ENCODE measurements at regions of chr2 and their contacts with region 1.

Region 1: DNA sequence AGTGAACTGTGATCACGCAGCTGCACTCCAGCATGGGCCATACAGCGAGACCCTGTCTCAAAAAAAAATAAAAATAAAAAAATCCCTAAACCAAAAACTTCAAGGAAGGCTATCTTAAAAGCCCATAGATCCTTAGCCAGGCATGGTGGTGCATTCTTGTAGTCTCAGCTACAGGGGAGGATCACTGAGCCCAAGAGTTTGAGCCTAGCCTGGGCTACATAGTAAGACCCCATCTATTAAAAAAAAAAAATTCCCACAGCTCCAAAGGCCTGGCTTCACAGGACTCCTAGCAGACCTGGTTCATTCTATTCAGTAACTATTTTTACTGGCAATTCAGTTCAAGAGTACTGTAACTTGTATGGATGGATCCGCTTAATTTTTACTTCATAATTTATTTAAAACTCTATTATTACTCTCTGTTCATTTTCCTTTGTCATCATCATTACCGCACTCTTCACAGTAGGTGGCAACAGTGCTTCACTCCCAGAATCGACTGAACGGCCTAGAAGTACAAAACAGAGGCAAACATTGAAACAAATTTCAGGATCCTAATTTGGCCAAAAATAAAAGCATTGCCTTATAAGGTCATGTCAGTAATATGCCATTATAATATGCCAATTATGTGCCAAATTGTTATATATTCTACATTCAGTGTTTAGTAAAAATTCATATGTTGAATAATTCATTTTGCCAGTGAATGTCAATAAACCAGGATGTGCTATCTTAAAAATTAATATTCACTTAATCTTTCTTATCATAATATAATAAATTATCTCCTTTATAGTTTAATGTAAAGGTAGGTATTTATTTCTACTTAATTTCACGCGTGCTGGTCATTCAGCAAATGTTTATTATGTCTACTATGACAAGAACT is 14.3 kb upstream of the STAM2 start:
- DNase-seq: peak; percentile 32 to 60 (median 41)
- ATAC-seq: peak; percentile 69
- H3K4me3 ChIP-seq: no peak overlapping the region
- H3K27ac ChIP-seq: no peak overlapping the region
- H3K4me1 ChIP-seq: no peaks in the 10 kb centered on the region
- H3K27me3 ChIP-seq: no peaks in the 10 kb centered on the region
- CTCF ChIP-seq: peak; percentile 65 to 92 (median 87)
- POLR2A ChIP-seq: no peak

Region 2: GRCh38 chr2:152335010-152335725 is 145.3 kb after region 1 on chr2 and contains the start of gene FMNL2:
- intact Hi-C with region 1: loop called (anchors 10 kb)
- DNase-seq: peak; percentile 82 to 90 (median 86)
- ATAC-seq: peak; percentile 87
- H3K4me3 ChIP-seq: peak within 1 kb of the TSS; percentile 79 to 84
- H3K27ac ChIP-seq: peak within 1 kb of the TSS; percentile 72 to 81 (median 76)
- H3K4me1 ChIP-seq: peaks cover 18% of the 10 kb centered on the region
- H3K27me3 ChIP-seq: no peaks in the 10 kb centered on the region
- CTCF ChIP-seq: peak in 4 of 7 experiments; percentile 5 to 16 (median 8)
- POLR2A ChIP-seq: peak; percentile 76 to 82 (median 78)
- total RNA-seq, gene FMNL2: 13.5 to 44.4 TPM

Region 3: DNA sequence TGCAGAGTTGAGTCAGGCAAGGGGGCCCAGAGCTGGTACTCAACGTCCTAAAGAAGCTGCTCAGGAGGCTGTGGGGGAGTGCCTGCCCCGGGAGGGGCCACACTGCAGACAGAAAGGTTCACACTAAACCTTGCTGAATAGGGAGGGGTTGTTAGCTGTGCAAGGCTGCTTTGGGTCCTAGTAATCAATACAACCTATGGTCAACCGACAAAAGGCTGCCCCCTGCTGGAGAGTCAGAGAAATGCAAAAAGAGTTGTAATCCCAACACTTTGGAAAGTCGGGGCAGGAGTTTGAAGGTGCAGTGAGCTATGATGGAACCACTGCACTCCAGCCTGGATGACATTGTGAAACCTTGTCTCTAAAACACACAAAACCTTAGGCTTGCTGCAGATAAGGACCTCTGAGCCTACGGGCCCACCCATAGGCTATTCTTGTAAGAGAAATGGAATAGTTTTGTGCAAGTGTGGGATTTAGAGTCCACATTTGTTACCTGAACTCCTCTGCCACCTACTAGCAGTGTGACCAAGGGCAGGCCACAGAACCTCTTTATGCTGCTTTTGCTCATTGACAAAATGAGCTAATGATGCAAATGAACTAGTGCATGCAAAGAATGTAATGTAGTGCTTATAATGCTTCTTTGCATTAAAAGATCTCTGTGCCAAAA is 445.9 kb after region 1 on chr2:
- intact Hi-C with region 1: loop called (anchors 5 kb)
- DNase-seq: peak; percentile 67 to 74 (median 68)
- ATAC-seq: peak; percentile 85
- H3K4me3 ChIP-seq: no peak overlapping the region
- H3K27ac ChIP-seq: no peak overlapping the region
- H3K4me1 ChIP-seq: no peaks in the 10 kb centered on the region
- H3K27me3 ChIP-seq: no peaks in the 10 kb centered on the region
- CTCF ChIP-seq: peak; percentile 58 to 82 (median 78)
- POLR2A ChIP-seq: no peak